ENCODE measurements at regions of chr16 and their contacts with region 1.

Region 1: GRCh38 chr16:69799611-69800031 is 37.5 kb downstream of the WWP2 start:
- DNase-seq: no peak
- H3K4me3 ChIP-seq: no peak overlapping the region
- CTCF ChIP-seq: no peak
- POLR2A ChIP-seq: no peak

Region 2: GRCh38 chr16:69930117-69930776 is 130.6 kb after region 1 on chr16:
- intact Hi-C with region 1: loop called (anchors 10 kb)
- DNase-seq: no peak
- H3K4me3 ChIP-seq: no peak overlapping the region
- CTCF ChIP-seq: peak in 1 of 3 donors; percentile 35
- POLR2A ChIP-seq: no peak

Measured in lower leg skin (tissue), 4 donors.